ENCODE measurements at regions of chr5 and their contacts with region 1.

Region 1: GRCh38 chr5:146185161-146185560 is 2.7 kb upstream of the LARS1 start:
- H3K4me3 Mint-ChIP-seq: no peak overlapping the region
- H3K27ac Mint-ChIP-seq: no peak overlapping the region
- H3K4me1 Mint-ChIP-seq: peaks cover 11% of the 10 kb centered on the region
- H3K27me3 Mint-ChIP-seq: peaks cover 2% of the 10 kb centered on the region

Region 2: GRCh38 chr5:145991044-145991575 is 194.1 kb before region 1 on chr5:
- intact Hi-C with region 1: no loop called
- H3K4me3 Mint-ChIP-seq: no peak overlapping the region
- H3K27ac Mint-ChIP-seq: no peak overlapping the region
- H3K4me1 Mint-ChIP-seq: no peaks in the 10 kb centered on the region
- H3K27me3 Mint-ChIP-seq: peaks cover 3% of the 10 kb centered on the region

Region 3: GRCh38 chr5:146203011-146203871 is 18.1 kb after region 1 on chr5 and contains the start of gene RBM27:
- intact Hi-C with region 1: loop called (anchors 1 kb)
- H3K4me3 Mint-ChIP-seq: no peak within 1 kb of the TSS
- H3K27ac Mint-ChIP-seq: no peak within 1 kb of the TSS
- H3K4me1 Mint-ChIP-seq: no peaks in the 10 kb centered on the region
- H3K27me3 Mint-ChIP-seq: no peaks in the 10 kb centered on the region

Measured in dendritic cell treated with granulocyte-macrophage colony-stimulating factor and Interleukin-4, amounts not matched to agents 40 ng/mL and 50 ng/mL, for 4 days (primary cell).